AG04449 (cell line): ENCODE measurements at regions of chr11 and their contacts with region 1.

Region 1: GRCh38 chr11:119323538-119324033 is 6.7 kb upstream of the MCAM start:
- DNase-seq: no peak
- H3K4me3 ChIP-seq: no peak overlapping the region
- CTCF ChIP-seq: peak; percentile 65

Region 2: DNA sequence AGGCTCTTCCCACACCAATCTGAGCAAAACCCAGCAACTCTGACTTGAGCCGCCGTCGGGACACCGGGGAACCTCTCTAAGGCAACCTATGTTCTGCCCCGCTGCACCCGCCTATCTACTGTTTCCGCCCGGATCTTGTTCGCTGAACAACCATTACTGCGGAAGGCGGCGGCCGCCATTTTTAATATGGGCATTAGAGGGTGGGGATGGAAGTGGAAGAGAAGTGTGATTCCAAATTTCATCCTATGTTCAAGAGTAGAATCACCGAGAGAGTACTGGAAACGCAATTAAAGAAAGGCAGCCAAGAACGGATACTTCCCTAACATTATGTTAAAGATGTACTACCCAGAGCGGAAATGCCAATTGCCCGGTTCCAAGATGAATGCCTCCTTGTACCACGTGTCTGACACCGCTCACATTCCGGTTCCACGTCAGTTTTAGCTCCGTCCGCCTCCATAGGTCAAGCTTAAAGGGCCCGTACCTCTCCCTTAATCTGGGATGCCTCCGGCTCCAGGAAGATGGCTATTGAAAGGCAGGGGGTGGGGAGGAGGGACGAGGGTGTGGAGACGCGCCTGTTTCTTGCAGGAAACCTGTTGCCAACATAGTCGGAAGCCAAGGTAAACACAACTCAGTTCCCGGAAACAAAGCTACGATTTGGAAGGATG is 221.7 kb before region 1 on chr11 and contains the start of gene DPAGT1:
- CTCF ChIA-PET with region 1: interaction called, 13 read pairs
- POLR2A ChIA-PET with region 1: no interaction called
- DNase-seq: peak; percentile 82
- H3K4me3 ChIP-seq: peak within 1 kb of the TSS; percentile 88
- CTCF ChIP-seq: no peak

Region 3: DNA sequence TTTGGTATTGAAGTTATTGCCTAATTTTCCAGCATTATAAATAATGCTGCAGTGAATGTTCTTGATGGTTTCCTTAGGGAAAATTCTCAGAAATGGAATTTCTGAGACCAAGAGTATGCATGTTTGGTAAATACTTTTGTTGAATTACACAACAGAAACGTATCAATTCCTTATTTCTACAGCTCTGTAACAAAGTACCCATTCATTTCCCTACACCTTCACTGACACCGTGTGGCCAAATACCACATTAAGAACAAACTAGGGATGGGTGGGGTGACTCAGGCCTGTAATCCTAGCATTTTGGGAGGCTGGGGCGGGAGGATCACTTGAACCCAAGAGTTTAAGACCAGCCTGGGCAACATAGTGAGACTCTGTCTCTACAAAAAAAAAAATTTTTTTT is 28.4 kb before region 1 on chr11:
- CTCF ChIA-PET with region 1: interaction called, 25 read pairs
- POLR2A ChIA-PET with region 1: no interaction called
- DNase-seq: no peak
- H3K4me3 ChIP-seq: no peak overlapping the region
- CTCF ChIP-seq: no peak

Region 4: DNA sequence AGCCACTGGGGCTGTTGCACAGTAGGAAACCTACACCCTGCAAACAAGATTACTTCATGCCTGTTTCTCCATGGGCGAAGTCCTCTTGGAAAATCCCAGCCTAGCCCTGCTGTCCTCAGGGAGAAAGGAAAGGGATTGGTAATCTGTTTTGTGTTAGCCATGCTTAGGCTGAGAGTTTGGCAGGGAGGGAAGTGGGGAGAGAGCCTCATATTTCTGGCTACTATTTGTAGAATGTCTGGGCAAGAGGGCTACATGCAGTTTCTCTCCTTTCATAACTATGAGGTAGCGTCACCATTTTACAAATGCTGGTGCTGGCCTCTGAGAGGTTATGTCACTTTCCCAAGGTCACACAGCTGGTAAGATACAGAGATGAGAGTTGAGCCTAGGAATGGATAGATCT is 23.7 kb after region 1 on chr11:
- CTCF ChIA-PET with region 1: interaction called, 342 read pairs
- POLR2A ChIA-PET with region 1: no interaction called
- DNase-seq: no peak
- H3K4me3 ChIP-seq: no peak overlapping the region
- CTCF ChIP-seq: no peak

Region 5: GRCh38 chr11:119373921-119374631 is 50.5 kb after region 1 on chr11:
- CTCF ChIA-PET with region 1: interaction called, 31 read pairs
- POLR2A ChIA-PET with region 1: no interaction called
- DNase-seq: peak; percentile 12
- H3K4me3 ChIP-seq: no peak overlapping the region
- CTCF ChIP-seq: peak; percentile 96

Region 6: DNA sequence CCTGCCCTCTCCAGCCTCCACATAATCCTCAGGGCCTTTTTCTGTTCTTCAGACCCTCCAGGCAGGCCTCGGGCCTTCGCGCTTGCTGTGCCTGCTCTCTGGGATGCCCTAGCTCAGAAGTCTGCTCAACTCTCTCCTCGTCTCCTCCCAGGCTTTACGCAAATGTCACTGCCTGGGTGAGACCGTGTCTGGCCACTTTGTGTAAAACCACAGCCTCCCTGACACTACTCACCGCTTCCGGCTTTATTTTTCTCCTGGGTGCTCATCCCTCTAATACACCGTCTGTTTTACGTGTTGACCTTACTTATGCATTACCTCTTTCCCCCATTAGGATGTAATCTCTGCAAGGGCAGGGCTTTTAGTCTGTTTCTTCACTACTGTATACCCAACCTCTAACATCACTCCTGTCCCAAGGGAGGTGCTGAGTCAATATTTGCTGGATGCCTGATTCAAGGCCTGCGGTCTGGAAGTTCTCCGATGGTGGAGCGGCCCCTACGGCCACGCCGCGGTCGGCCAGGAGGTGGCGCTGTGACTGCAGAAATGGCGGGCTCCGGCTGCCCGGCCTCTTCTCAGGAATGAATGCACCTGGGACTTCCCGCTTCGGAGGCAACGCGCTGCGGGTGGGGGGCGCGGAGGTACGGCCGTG is 157.6 kb after region 1 on chr11:
- CTCF ChIA-PET with region 1: interaction called, 14 read pairs
- POLR2A ChIA-PET with region 1: no interaction called
- DNase-seq: peak; percentile 90
- H3K4me3 ChIP-seq: no peak overlapping the region
- CTCF ChIP-seq: peak; percentile 95

Region 7: DNA sequence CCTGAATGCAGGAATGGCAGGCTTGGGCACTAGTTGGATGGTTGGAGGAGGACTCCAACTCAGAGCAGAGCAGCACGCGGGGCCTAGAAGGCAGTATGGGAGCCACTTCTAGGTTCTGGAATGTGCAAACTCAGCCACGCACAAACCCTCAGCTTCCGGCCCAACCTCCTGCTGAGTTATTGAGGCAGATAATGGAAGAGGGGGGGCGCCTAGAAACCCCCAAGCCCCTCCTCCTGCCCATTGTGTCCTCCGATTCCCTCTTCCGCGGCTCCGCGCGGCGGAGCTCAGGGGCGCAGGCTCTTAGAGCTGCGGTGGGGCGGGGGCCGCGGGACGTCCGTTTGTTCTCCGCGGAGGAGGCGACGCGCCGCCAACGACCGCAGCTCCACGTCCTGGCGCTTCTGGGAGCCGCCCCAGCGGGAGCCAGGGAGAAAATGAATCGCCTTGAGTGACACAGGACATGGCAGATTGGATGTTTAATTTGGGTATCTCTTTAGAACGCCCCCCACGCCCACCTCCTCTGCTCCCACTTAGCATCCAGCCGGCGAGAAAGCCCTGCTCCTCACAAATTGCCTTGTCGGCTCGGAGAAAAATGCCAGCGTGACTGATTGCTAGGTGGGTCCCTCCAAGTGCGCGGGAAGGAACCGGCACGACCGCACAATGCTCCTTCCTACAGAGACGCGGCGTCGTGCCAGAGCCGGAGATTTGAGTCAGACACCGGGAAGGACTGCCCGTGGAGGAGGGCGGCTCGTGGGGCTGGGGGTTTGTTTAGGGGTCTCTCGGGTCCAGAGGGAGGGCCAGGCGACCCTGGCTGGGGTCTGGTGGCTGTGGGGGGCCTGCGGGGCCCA is 260.8 kb after region 1 on chr11:
- CTCF ChIA-PET with region 1: no interaction called
- POLR2A ChIA-PET with region 1: no interaction called
- DNase-seq: no peak
- H3K4me3 ChIP-seq: peak overlapping the region; percentile 60
- CTCF ChIP-seq: no peak

Region 8: DNA sequence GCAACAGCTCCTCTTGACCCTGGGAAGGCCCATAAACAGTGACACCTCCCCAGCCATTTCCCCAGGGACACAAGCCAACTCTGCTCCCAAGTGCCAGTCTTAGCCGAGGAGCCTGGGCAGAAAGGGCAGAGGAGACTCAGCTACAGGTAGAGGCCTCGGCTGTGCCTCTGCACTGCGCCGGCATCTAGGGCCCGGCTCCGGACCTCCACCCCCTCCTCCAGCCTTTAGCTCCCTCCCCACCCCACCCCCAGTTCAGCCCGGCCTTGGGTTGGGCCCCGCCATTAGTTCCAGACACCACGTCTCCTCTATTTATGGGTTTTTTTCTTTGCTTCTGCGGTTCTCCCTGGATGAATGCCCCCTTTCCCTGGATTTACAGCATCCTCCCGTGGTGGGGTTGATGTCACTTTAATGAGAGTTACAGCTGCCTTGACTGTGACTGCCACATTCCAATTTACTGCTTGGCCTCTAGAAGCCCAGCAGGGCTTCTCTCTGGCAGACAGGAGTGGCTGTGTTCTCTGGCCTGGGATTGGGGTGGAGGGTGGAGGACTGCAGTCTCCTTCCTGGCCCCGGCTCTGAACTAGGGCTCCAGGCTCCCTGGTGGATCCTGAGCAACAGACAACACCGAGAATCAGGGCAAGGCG is 873.8 kb after region 1 on chr11:
- CTCF ChIA-PET with region 1: no interaction called
- POLR2A ChIA-PET with region 1: no interaction called
- DNase-seq: no peak
- H3K4me3 ChIP-seq: no peak overlapping the region
- CTCF ChIP-seq: no peak